ENCODE measurements at regions of chr12 and their contacts with region 1.

Region 1: DNA sequence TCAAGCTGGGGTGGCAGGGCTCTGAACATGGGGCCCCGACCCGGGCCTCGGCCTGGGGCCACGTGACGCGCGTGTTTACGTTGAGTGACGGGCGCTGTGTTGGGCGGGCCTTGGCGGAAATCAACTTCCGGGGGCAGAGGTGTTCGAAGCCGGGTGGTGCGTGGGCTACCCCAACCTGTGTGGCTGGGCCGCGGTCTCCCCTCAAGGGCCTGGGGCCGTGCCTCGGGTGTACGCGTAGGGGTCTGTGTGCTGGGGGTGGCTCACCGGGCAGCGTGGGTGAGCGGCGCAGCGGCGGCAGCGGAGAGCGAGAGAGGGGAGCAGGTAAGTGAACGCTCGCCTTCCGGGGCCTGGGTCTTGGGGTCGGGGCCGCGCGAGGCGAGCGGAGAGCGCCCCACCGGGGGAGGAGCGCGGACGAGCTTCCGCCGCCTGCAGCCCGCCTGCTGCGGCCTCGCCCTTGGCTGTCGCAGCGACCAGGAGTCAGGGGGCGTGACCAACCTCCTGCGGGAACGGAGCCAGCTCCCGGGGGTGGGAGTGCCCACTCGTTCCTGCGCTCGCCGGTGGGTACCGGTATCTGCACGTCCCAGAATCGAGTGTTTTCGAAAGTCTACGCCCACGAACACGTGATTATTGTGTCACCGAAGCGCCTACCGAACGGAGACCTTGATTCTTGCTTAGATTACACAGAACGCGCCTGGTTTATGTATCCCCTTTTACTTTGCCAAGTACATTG is at the start of gene CCDC91:
- DNase-seq: peak; percentile 86 to 92 (median 88)
- ATAC-seq: peak; percentile 91 to 96 (median 93)
- H3K4me3 ChIP-seq: peak within 1 kb of the TSS; percentile 55 to 99 (median 86)
- H3K27ac ChIP-seq: peak within 1 kb of the TSS; percentile 93 to 99 (median 97)
- H3K4me1 ChIP-seq: peaks cover 0 to 23% (median 6%) of the 10 kb centered on the region in 12 donors
- H3K27me3 ChIP-seq: no peaks in the 10 kb centered on the region
- CTCF ChIP-seq: peak in 2 of 12 donors; percentile 6 to 7
- POLR2A ChIP-seq: peak in 1 of 2 donors; percentile 53
- total RNA-seq, gene CCDC91: 36.0 to 62.1 (median 52.2) TPM

Region 2: GRCh38 chr12:27807063-27807703 is 383.3 kb before region 1 on chr12:
- intact Hi-C with region 1: no loop called
- DNase-seq: no peak
- ATAC-seq: no peak
- H3K4me3 ChIP-seq: no peak overlapping the region
- H3K27ac ChIP-seq: no peak overlapping the region
- H3K4me1 ChIP-seq: no peaks in the 10 kb centered on the region
- H3K27me3 ChIP-seq: no peaks in the 10 kb centered on the region
- CTCF ChIP-seq: no peak
- POLR2A ChIP-seq: no peak

Region 3: DNA sequence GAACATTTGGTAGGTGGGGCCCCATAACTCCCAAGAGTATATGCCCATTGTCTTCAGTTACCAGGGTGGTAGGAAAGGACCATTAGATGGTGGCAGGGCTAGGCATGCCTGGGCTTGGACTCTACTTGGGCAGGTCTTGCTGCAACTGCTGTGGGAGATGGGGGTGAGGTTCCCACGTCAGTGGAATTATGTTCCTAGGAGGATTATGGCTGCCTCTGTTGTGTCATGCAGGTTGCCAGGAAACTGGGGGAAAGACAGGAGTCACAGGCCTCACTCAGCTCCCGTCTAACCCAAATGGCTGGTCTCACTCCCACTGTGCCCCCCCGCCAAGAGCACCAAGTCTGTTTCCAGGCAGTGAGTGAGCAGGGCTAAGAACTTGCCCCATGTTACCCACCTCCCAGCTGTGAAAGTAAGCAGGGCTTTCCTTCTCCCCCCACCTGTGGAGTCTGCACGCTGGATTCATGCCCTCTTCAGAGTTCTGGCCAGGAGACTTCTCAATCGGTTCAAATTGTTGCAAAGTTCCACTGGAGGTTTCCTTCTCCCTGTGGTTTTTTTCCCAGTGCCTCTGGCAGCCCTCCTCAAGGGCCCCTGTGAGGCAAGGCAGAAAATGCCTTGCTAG is 337.3 kb after region 1 on chr12:
- intact Hi-C with region 1: loop called in 1 of 10 experiments (anchors 5 kb)
- DNase-seq: no peak
- ATAC-seq: no peak
- H3K4me3 ChIP-seq: no peak overlapping the region
- H3K27ac ChIP-seq: no peak overlapping the region
- H3K4me1 ChIP-seq: no peaks in the 10 kb centered on the region
- H3K27me3 ChIP-seq: no peaks in the 10 kb centered on the region
- CTCF ChIP-seq: no peak
- POLR2A ChIP-seq: no peak

Measured in heart left ventricle (tissue), 16 donors.